BJ (cell line): ENCODE measurements at regions of chr2 and their contacts with region 1.

Region 1: GRCh38 chr2:50515638-50516037 is 516.3 kb downstream of the NRXN1 start:
- DNase-seq: no peak
- H3K4me3 ChIP-seq: no peak overlapping the region
- H3K27me3 ChIP-seq: no peaks in the 10 kb centered on the region
- CTCF ChIP-seq: no peak

Region 2: GRCh38 chr2:50529600-50530218 is 14.1 kb after region 1 on chr2:
- CTCF ChIA-PET with region 1: interaction called, 11 read pairs
- POLR2A ChIA-PET with region 1: no interaction called
- DNase-seq: peak; percentile 4
- H3K4me3 ChIP-seq: no peak overlapping the region
- H3K27me3 ChIP-seq: no peaks in the 10 kb centered on the region
- CTCF ChIP-seq: peak; percentile 78